ENCODE measurements at regions of chr12 and their contacts with region 1.

Region 1: GRCh38 chr12:7970475-7971252 is 34.7 kb upstream of the SLC2A3 start:
- DNase-seq: peak; percentile 85
- H3K4me3 Mint-ChIP-seq: peak overlapping the region; percentile 96
- H3K27ac Mint-ChIP-seq: peak overlapping the region; percentile 100
- H3K4me1 Mint-ChIP-seq: peaks cover 27% of the 10 kb centered on the region
- H3K27me3 Mint-ChIP-seq: no peaks in the 10 kb centered on the region

Region 2: DNA sequence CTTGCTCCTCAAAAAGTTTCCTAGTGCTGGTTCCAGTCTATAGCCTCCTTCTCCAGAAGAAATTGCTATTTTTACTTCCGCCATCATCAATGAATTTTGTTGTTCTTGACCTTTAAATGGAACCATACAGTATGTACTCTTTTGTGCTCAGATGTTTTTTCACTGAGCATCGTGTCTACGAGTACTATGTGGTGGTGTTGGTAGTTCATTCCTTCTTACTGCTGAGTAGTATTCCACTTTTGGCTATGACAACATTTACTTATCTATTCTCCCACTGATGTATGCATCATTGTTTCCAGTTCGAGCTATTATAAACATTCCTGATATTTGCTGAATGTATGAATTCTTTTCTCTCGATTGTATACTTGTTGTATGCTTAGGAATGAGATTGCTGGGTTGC is 126.5 kb before region 1 on chr12:
- intact Hi-C with region 1: no loop called
- DNase-seq: no peak
- H3K4me3 Mint-ChIP-seq: no peak overlapping the region
- H3K27ac Mint-ChIP-seq: no peak overlapping the region
- H3K4me1 Mint-ChIP-seq: peaks cover 9% of the 10 kb centered on the region
- H3K27me3 Mint-ChIP-seq: peaks cover 17% of the 10 kb centered on the region

Region 3: GRCh38 chr12:7995266-7995963 is 24.8 kb after region 1 on chr12:
- intact Hi-C with region 1: loop called (anchors 1 kb)
- DNase-seq: peak; percentile 80
- H3K4me3 Mint-ChIP-seq: no peak overlapping the region
- H3K27ac Mint-ChIP-seq: no peak overlapping the region
- H3K4me1 Mint-ChIP-seq: peaks cover 17% of the 10 kb centered on the region
- H3K27me3 Mint-ChIP-seq: no peaks in the 10 kb centered on the region